MCF 10A (cell line): ENCODE measurements at regions of chr6 and their contacts with region 1.

Region 1: DNA sequence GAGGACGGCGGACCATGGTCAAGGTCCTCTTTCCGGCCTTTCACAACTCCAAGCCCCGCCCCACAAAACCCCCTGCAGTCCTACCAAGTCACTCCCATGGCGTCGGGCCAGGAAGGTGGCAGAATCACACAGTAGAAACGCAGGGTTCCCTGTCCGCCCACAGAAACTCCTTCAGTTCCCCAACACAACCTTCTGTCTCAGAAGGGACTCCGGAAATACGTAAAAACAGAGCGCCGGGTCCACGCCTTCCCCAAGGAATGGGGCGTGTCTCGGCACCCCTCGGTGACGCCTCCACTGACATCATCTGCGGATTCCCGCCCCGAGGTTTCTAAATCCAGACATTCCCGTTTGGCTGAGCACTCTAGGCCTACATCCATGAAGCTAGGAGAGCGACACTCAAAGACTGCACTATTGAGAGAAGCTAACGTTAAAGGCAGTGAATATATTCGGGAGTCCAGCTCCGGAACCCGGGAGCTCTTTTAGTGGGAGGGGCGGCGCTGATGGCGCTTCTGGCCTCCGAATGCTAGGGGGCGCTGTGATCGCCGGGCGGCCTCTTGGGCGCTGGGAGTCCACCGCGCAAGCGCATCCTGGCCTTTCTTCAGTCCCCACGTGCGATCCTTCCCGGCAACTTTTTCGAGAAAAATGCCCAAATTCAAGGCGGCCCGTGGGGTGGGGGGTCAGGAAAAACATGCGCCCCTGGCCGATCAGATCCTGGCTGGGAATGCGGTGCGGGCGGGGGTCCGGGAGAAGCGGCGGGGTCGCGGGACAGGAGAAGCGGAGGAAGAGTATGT is at the starts of genes BYSL and MED20:
- DNase-seq: peak; percentile 96
- H3K4me3 Mint-ChIP-seq: peak within 1 kb of the TSS; percentile 99
- H3K27ac Mint-ChIP-seq: peak within 1 kb of the TSS; percentile 100
- H3K4me1 Mint-ChIP-seq: peaks cover 41% of the 10 kb centered on the region
- H3K27me3 Mint-ChIP-seq: no peaks in the 10 kb centered on the region
- CTCF ChIP-seq: peak; percentile 96
- total RNA-seq, gene BYSL: 45.0 and 58.0 TPM in 2 replicates
- total RNA-seq, gene MED20: 27.6 and 29.2 TPM in 2 replicates

Region 2: DNA sequence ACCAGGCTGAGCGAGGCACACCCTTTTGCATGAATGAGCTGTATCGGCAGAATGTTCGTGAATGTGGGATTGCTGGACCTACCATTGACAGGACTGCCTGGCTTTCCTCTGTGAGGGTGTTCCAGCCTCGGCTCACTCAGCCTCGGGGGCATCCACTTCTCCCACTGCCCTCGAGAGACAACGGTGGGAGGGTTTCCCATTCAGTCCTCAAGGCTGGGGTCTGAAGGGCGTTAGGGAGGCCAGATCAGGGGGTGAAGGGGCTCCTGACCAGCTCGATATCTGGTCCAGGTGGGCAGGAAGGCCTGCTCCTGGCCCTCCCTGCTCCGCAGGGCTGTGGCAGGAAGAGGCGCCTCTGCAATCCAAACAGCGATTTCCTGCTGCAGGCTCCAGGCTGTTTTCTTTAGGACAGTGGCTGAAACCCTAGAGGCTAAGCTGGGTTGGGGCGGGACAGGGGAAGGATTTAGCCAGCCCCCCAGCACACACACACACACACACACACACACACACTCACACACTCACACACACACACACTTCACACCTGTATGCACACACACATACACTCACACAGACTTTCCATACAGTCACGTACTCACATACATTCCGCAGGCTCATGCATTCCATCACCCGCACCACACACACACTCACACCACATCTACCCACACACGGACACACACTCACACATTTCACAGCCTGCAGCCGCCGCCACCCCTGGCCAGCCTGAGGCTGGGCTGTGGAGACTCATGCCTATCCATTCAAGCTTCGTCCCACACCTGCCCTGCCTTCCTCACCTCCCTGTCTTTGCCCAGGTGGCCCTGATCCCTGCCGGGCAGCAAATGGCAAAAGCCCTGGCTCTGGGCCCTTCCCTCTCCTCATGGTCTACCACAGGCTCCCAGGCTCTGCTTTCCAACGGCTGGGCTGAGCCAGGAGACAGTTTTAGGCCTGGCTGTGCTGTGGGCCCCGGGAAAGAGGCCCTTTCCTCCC is 265.1 kb before region 1 on chr6:
- CTCF ChIA-PET with region 1: no interaction called
- POLR2A ChIA-PET with region 1: no interaction called
- intact Hi-C with region 1: no loop called
- DNase-seq: no peak
- H3K4me3 Mint-ChIP-seq: no peak overlapping the region
- H3K27ac Mint-ChIP-seq: no peak overlapping the region
- H3K4me1 Mint-ChIP-seq: no peaks in the 10 kb centered on the region
- H3K27me3 Mint-ChIP-seq: peaks cover 32% of the 10 kb centered on the region
- CTCF ChIP-seq: no peak

Region 3: DNA sequence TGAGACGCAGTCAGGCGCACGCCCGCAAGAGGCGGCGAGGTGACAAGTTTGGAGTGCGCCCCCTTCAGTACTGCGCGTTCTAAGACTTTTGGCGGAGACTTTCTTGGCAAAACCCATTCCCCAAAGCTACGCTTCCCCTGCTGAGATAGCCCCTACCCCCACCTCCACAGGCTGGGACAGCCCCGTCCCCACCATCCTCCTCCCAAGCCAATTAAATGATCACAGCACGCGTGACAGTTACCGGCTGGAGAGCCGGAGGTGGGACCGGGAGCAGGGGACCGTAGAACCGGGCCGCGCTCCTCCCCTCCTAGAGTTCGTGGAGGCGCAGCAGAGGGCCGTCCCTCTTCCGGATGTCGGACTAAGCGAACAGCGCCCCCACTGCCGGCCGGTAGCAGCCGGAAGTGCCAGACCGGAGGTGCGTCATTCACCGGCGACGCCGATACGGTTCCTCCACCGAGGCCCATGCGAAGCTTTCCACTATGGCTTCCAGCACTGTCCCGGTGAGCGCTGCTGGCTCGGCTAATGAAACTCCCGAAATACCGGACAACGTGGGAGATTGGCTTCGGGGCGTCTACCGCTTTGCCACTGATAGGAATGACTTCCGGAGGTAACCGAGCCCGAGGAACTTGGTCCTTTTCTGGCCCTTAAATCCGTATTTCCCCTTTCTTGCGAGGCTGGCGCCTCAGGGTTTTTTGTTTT is 133.7 kb before region 1 on chr6 and contains the start of gene TOMM6:
- CTCF ChIA-PET with region 1: interaction called, 33 read pairs
- POLR2A ChIA-PET with region 1: interaction called, 49 read pairs
- intact Hi-C with region 1: loop called (anchors 1 kb)
- DNase-seq: peak; percentile 93
- H3K4me3 Mint-ChIP-seq: peak within 1 kb of the TSS; percentile 88
- H3K27ac Mint-ChIP-seq: peak within 1 kb of the TSS; percentile 96
- H3K4me1 Mint-ChIP-seq: peaks cover 13% of the 10 kb centered on the region
- H3K27me3 Mint-ChIP-seq: no peaks in the 10 kb centered on the region
- CTCF ChIP-seq: peak; percentile 89
- total RNA-seq, gene TOMM6: 202 and 227 TPM in 2 replicates

Region 4: DNA sequence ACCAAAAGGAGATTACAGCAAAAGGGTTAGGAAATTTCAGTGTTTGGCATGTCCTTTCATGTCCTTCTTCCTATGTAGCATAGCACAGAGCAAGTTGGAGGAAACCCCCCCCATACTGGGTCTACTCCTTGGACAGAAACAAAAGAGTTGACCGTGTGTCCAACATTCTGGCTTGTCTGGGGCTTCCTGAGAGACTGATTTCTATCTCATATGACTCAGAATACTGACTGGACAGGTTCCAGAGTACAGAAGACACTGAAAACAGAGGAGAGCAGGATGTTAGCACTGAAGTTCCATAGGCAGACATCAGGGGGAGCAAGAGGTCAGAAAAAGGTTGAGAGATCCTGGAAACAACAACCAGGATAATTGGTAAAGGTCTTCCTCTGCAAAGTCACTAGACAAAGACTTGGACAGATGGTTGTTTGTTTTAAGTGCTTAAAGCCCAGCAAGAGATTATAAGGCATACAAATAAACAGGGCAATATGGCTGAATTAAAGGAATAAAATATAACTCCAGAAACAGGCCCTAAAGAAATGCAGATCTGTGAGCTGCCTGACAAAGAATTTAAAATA is 74.4 kb before region 1 on chr6:
- CTCF ChIA-PET with region 1: interaction called, 21 read pairs
- POLR2A ChIA-PET with region 1: interaction called, 46 read pairs
- intact Hi-C with region 1: loop called (anchors 1 kb)
- DNase-seq: peak; percentile 97
- H3K4me3 Mint-ChIP-seq: no peak overlapping the region
- H3K27ac Mint-ChIP-seq: peak overlapping the region; percentile 49
- H3K4me1 Mint-ChIP-seq: peaks cover 12% of the 10 kb centered on the region
- H3K27me3 Mint-ChIP-seq: no peaks in the 10 kb centered on the region
- CTCF ChIP-seq: peak; percentile 79

Region 5: GRCh38 chr6:41895300-41896233 is 25.5 kb before region 1 on chr6 and contains the start of gene USP49:
- CTCF ChIA-PET with region 1: interaction called, 7 read pairs
- POLR2A ChIA-PET with region 1: interaction called, 35 read pairs
- intact Hi-C with region 1: no loop called
- DNase-seq: peak; percentile 77
- H3K4me3 Mint-ChIP-seq: no peak within 1 kb of the TSS
- H3K27ac Mint-ChIP-seq: no peak within 1 kb of the TSS
- H3K4me1 Mint-ChIP-seq: peaks cover 9% of the 10 kb centered on the region
- H3K27me3 Mint-ChIP-seq: no peaks in the 10 kb centered on the region
- CTCF ChIP-seq: no peak
- total RNA-seq, gene USP49: 4.1 and 4.3 TPM in 2 replicates

Region 6: GRCh38 chr6:41941280-41942066 is 20.4 kb after region 1 on chr6 and contains the start of gene CCND3:
- CTCF ChIA-PET with region 1: interaction called, 74 read pairs
- POLR2A ChIA-PET with region 1: interaction called, 157 read pairs
- intact Hi-C with region 1: loop called (anchors 1 kb)
- DNase-seq: peak; percentile 88
- H3K4me3 Mint-ChIP-seq: peak within 1 kb of the TSS; percentile 85
- H3K27ac Mint-ChIP-seq: peak within 1 kb of the TSS; percentile 59
- H3K4me1 Mint-ChIP-seq: peaks cover 25% of the 10 kb centered on the region
- H3K27me3 Mint-ChIP-seq: no peaks in the 10 kb centered on the region
- CTCF ChIP-seq: no peak
- total RNA-seq, gene CCND3: 52.5 and 75.8 TPM in 2 replicates

Region 7: GRCh38 chr6:41974281-41974825 is 53.2 kb after region 1 on chr6:
- CTCF ChIA-PET with region 1: no interaction called
- POLR2A ChIA-PET with region 1: no interaction called
- intact Hi-C with region 1: no loop called
- DNase-seq: no peak
- H3K4me3 Mint-ChIP-seq: no peak overlapping the region
- H3K27ac Mint-ChIP-seq: no peak overlapping the region
- H3K4me1 Mint-ChIP-seq: peaks cover 6% of the 10 kb centered on the region
- H3K27me3 Mint-ChIP-seq: no peaks in the 10 kb centered on the region
- CTCF ChIP-seq: no peak